MCF 10A (cell line): ENCODE measurements at regions of chr6 and their contacts with region 1.

Region 1: DNA sequence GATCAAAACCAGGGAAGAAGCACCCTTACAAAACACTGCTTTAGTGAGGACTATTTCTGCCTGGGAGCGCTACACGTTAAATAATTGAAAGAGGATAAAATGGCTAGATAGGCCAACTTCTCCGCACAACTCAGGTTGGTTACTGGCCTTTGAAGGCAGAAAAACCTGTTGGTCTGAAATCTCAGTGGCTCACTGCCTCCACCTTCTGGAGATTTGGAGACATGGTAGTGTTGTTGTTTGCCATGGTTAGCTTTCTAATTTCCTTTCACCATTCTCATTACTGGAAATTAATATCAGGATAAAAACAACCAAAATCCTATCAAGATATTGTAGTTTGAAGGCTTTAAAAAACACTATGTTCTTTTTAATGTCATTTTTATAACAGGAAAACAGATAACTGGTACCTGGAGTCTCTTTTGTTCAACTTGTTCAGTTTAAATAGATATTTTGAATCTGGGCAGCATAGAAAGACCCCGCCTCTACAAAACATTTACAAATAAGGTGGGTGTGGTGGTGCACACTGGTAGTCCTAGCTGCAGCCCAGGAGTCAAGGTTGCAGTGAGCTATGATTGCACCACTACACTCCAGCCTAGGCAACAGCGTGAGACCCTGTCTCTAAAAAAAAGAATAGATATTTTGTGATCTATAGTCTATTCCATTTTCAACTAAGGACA is 27.5 kb upstream of the BCLAF1 start:
- DNase-seq: peak; percentile 79
- H3K4me3 Mint-ChIP-seq: no peak overlapping the region
- H3K27ac Mint-ChIP-seq: no peak overlapping the region
- H3K4me1 Mint-ChIP-seq: no peaks in the 10 kb centered on the region
- H3K27me3 Mint-ChIP-seq: no peaks in the 10 kb centered on the region
- CTCF ChIP-seq: peak; percentile 63

Region 2: DNA sequence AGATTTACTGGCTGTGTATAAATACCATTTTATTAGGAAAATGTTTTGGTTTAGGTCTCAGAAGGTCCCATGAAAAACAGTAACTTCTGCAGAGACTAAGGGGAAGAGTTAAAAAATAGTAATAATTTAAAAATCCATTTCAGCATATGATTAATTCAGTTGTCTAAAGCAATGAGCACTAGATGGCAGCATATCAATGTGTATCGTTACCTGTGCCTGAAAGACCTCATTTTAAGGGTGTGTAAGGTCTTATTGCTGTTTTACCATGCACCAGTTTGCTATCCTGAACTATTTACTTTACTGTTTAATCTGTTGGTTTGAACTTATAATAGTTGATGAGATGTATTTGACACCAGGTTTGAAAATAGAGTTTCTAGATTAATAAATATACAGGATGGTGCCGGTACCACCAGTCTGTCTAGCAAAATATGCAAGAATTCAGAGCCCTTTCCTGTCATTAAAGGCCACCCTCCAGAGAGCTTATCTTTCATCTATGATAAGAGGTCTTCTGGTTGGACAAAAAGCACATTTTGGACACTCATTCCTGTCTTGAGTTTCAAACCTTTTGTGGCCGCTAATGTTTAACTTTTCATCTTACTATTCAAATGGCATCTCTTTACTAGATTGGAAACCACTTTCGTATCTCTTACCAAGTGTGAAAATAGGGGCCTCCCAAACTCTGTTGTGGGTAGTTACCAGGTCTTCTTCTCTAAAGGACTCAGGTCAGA is 810.7 kb before region 1 on chr6:
- CTCF ChIA-PET with region 1: interaction called, 12 read pairs
- POLR2A ChIA-PET with region 1: no interaction called
- intact Hi-C with region 1: loop called (anchors 1 kb)
- DNase-seq: peak; percentile 66
- H3K4me3 Mint-ChIP-seq: no peak overlapping the region
- H3K27ac Mint-ChIP-seq: no peak overlapping the region
- H3K4me1 Mint-ChIP-seq: no peaks in the 10 kb centered on the region
- H3K27me3 Mint-ChIP-seq: no peaks in the 10 kb centered on the region
- CTCF ChIP-seq: peak; percentile 43

Region 3: DNA sequence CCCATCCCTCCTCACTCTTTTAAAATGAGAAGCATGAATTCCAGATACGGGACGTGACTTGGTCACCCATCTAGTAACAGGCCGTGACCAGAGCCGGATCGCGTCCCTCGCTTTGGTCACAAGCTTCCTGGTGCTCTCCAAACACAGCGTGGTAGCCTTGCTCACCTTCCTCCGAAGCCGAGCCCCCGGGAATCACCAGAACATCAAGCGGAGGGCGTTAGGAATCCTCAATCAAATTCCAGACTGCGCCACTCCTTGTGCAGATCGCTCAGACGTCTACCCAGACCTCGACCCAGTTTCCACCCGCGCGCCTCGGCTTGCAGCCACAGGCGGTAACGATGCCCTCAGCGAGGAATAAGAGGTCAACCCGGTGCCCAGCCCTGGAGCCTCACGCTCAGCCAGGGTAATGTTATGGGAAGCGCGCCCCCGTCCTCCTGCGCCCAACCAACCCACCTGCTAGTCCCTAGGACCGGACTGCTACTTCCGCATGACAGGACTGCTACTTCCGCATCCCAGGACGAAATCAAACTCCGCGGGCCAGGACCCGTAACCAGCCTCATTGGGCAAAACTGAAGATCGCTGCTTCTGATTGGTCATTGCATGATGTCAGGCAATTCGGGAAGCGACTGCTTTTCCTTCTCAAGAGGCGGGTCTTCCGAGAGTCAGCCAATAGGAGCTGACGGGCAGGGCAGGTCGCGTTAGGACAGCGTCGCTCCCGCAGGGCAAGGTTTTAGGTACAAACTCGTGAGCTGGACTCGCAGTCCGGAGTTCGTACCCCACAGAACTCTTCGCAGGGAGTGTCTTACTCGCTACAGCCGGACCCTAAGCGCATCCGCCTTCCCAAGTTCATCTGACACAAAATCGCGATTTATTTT is 67.1 kb before region 1 on chr6 and contains the start of gene MTFR2:
- CTCF ChIA-PET with region 1: interaction called, 5 read pairs
- POLR2A ChIA-PET with region 1: interaction called, 5 read pairs
- intact Hi-C with region 1: loop called (anchors 1 kb)
- DNase-seq: peak; percentile 100
- H3K4me3 Mint-ChIP-seq: peak within 1 kb of the TSS; percentile 97
- H3K27ac Mint-ChIP-seq: peak within 1 kb of the TSS; percentile 82
- H3K4me1 Mint-ChIP-seq: peaks cover 12% of the 10 kb centered on the region
- H3K27me3 Mint-ChIP-seq: no peaks in the 10 kb centered on the region
- CTCF ChIP-seq: no peak
- total RNA-seq, gene MTFR2: 5.2 and 6.0 TPM in 2 replicates

Region 4: GRCh38 chr6:136306466-136306865 is 10.7 kb before region 1 on chr6:
- CTCF ChIA-PET with region 1: interaction called, 11 read pairs
- POLR2A ChIA-PET with region 1: no interaction called
- intact Hi-C with region 1: no loop called
- DNase-seq: no peak
- H3K4me3 Mint-ChIP-seq: no peak overlapping the region
- H3K27ac Mint-ChIP-seq: no peak overlapping the region
- H3K4me1 Mint-ChIP-seq: no peaks in the 10 kb centered on the region
- H3K27me3 Mint-ChIP-seq: no peaks in the 10 kb centered on the region
- CTCF ChIP-seq: no peak

Region 5: GRCh38 chr6:136550330-136551071 is 233.3 kb after region 1 on chr6 and contains the start of gene MAP7:
- CTCF ChIA-PET with region 1: interaction called, 13 read pairs
- POLR2A ChIA-PET with region 1: interaction called, 3 read pairs
- intact Hi-C with region 1: loop called (anchors 1 kb)
- DNase-seq: peak; percentile 86
- H3K4me3 Mint-ChIP-seq: peak within 1 kb of the TSS; percentile 72
- H3K27ac Mint-ChIP-seq: peak within 1 kb of the TSS; percentile 57
- H3K4me1 Mint-ChIP-seq: peaks cover 8% of the 10 kb centered on the region
- H3K27me3 Mint-ChIP-seq: no peaks in the 10 kb centered on the region
- CTCF ChIP-seq: peak; percentile 97
- total RNA-seq, gene MAP7: 15.4 and 17.2 TPM in 2 replicates